ENCODE measurements at regions of chr9 and their contacts with region 1.

Region 1: GRCh38 chr9:69444021-69444420 is 119.0 kb downstream of the ENTREP1 start:
- DNase-seq: no peak
- H3K4me3 ChIP-seq: no peak overlapping the region
- H3K27ac ChIP-seq: no peak overlapping the region
- H3K4me1 ChIP-seq: no peaks in the 10 kb centered on the region
- H3K27me3 ChIP-seq: no peaks in the 10 kb centered on the region
- CTCF ChIP-seq: no peak

Region 2: DNA sequence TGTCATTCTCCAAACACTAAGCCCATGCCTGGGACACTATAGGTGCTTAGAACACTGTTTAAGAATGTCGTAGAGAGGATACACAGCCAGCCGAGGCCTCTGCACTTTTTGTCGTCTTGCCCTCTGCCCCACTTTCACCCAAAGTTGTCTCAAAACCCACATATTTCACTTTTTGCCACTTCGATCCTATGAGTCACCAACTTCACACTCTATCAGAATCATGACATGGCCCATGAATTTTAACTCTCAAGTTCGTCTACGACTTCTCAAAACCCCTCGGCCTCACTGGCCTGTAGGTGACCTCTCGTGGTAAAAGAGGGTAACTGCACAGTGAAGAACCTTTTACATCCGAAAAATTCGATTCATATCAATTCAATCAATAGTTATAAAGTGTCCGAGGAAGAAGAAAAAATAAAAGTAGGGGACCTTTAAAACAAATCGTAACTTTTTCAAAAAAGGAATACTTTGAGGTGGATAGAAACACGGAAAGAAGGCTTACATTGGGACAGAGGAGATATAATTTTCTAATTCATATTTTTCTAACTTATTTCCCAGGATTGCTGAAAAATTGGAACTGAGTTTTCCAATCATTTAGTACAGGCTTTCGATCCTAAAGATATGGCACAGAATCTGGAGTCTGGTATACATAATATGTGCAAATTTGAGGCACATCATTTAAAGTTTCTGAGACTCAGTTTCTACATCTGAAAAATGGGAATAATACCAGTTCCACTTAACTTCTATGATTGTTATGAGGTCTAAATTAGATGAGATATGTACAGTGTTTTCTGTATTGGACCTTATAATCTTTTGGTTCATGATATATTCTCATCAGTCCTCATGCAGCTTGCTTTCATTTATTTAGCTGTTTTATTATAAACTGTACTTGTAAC is 105.5 kb after region 1 on chr9:
- dilution Hi-C with region 1: loop called (anchors 25 kb)
- DNase-seq: no peak
- H3K4me3 ChIP-seq: no peak overlapping the region
- H3K27ac ChIP-seq: no peak overlapping the region
- H3K4me1 ChIP-seq: no peaks in the 10 kb centered on the region
- H3K27me3 ChIP-seq: no peaks in the 10 kb centered on the region
- CTCF ChIP-seq: peak; percentile 65 to 86 (median 82)

Measured in keratinocyte (primary cell).